Heart left ventricle (tissue), 16 donors: ENCODE measurements at regions of chr10 and their contacts with region 1.

Region 1: GRCh38 chr10:3785257-3785850 is 345 bp upstream of the KLF6 start:
- DNase-seq: peak; percentile 99 to 100 (median 99)
- ATAC-seq: peak; percentile 80 to 91 (median 82)
- H3K4me3 ChIP-seq: peak overlapping the region; percentile 66 to 100 (median 96)
- H3K27ac ChIP-seq: peak overlapping the region; percentile 98 to 100 (median 100)
- H3K4me1 ChIP-seq: peaks cover 0 to 35% (median 20%) of the 10 kb centered on the region in 12 donors
- H3K27me3 ChIP-seq: no peaks in the 10 kb centered on the region
- CTCF ChIP-seq: peak in 1 of 12 donors; percentile 21
- POLR2A ChIP-seq: peak; percentile 99 to 100

Region 2: GRCh38 chr10:3197348-3198003 is 587.9 kb before region 1 on chr10:
- intact Hi-C with region 1: loop called in 1 of 10 experiments (anchors 5 kb)
- DNase-seq: peak; percentile 78 to 90 (median 83)
- ATAC-seq: peak; percentile 76 to 96 (median 92)
- H3K4me3 ChIP-seq: peak overlapping the region in 9 of 12 donors; percentile 18 to 43 (median 32)
- H3K27ac ChIP-seq: peak overlapping the region in 4 of 12 donors; percentile 26 to 61 (median 28)
- H3K4me1 ChIP-seq: peaks cover 0 to 23% (median 11%) of the 10 kb centered on the region in 12 donors
- H3K27me3 ChIP-seq: no peaks in the 10 kb centered on the region
- CTCF ChIP-seq: peak; percentile 81 to 96 (median 93)
- POLR2A ChIP-seq: no peak

Region 3: GRCh38 chr10:3500408-3500856 is 284.9 kb before region 1 on chr10:
- intact Hi-C with region 1: loop called in 1 of 10 experiments (anchors 5 kb)
- DNase-seq: peak; percentile 68 to 91 (median 71)
- ATAC-seq: peak; percentile 92 to 96 (median 94)
- H3K4me3 ChIP-seq: no peak overlapping the region
- H3K27ac ChIP-seq: peak overlapping the region in 10 of 12 donors; percentile 3 to 75 (median 46)
- H3K4me1 ChIP-seq: peaks cover 0 to 24% (median 5%) of the 10 kb centered on the region in 12 donors
- H3K27me3 ChIP-seq: no peaks in the 10 kb centered on the region
- CTCF ChIP-seq: no peak
- POLR2A ChIP-seq: no peak

Region 4: DNA sequence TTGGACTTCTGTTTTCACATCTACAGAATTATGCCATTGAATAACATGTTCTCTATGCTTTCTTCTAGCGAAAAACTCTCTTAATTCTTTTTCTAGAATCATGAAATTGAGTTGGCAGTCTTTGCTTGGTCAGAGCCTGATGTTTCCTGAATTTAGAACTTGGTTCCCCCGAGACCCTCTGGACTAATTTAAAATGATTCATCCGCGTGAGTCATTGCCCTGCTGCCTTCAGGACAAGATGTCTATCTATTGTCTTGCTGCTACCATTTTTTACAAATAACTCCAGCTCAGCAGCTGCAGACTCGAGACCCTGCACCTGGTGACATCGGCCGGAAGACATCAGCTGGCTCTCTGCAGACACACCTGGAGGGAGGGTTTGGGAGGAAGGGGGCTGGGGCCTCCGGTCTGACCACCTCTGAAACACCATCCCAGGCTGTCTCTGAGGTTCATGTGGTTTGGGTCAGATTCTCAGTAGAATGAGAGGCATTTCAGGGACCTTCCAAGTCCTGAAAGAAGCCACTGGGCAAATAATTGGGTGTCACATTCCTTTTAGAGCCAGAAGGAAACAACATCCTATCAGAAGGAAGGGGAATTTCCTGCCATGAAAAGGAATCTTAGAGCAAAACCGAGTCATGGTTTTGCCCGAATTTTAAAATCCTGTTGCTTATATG is 20.6 kb after region 1 on chr10:
- intact Hi-C with region 1: loop called in 5 of 10 experiments (anchors 1 to 2 kb)
- DNase-seq: peak in 4 of 5 donors; percentile 53 to 76 (median 59)
- ATAC-seq: peak in 3 of 4 donors; percentile 8 to 47 (median 43)
- H3K4me3 ChIP-seq: peak overlapping the region in 6 of 12 donors; percentile 4 to 31 (median 9)
- H3K27ac ChIP-seq: peak overlapping the region; percentile 66 to 96 (median 84)
- H3K4me1 ChIP-seq: peaks cover 0 to 94% (median 76%) of the 10 kb centered on the region in 12 donors
- H3K27me3 ChIP-seq: no peaks in the 10 kb centered on the region
- CTCF ChIP-seq: no peak
- POLR2A ChIP-seq: no peak

Region 5: DNA sequence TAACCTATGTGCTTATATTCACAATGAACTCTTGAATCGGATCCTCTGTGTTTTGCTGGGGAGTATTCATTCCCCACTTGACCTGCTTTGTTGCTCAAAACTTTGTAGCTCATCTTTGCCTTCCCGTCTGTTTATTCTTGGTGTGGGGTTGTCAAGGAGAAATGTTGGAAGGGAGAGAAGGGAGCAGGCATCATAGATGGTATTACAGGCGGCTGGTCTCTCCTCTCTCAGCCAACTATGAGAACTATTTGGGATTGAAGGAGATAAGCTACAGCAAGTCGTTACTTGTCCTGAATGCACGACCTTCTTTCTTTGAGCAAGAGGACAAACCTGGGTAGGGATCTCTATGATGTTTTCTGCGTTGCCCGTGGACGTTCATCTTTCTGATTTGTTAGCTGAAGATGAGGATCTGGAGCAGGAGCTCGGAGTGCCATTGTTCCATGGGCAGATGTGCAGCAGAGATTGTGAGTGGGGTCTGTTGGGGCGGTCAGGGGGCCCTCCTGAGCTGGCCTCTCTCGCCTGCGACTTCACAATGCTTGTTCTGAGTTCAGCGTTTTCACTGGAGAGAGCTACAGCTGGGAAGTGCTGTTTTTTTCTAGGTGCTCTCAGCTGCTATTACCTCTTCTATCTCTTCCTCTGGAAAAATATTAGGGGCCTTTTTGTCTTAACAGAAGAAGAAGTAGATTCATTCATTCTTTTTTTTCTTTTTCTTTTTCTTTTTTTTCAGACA is 126.5 kb after region 1 on chr10:
- intact Hi-C with region 1: loop called in 6 of 10 experiments (anchors 2 to 10 kb)
- DNase-seq: no peak
- ATAC-seq: peak; percentile 87 to 90 (median 89)
- H3K4me3 ChIP-seq: peak overlapping the region in 11 of 12 donors; percentile 6 to 56 (median 48)
- H3K27ac ChIP-seq: peak overlapping the region; percentile 53 to 91 (median 82)
- H3K4me1 ChIP-seq: peaks cover 0 to 36% (median 0%) of the 10 kb centered on the region in 12 donors
- H3K27me3 ChIP-seq: no peaks in the 10 kb centered on the region
- CTCF ChIP-seq: no peak
- POLR2A ChIP-seq: peak in 1 of 2 donors; percentile 30

Region 6: GRCh38 chr10:4372601-4373000 is 587.2 kb after region 1 on chr10:
- intact Hi-C with region 1: loop called in 1 of 10 experiments (anchors 10 kb)
- DNase-seq: peak in 2 of 5 donors; percentile 19 to 35
- ATAC-seq: peak; percentile 84 to 98 (median 91)
- H3K4me3 ChIP-seq: no peak overlapping the region
- H3K27ac ChIP-seq: peak overlapping the region in 10 of 12 donors; percentile 32 to 71 (median 59)
- H3K4me1 ChIP-seq: peaks cover 0 to 20% (median 7%) of the 10 kb centered on the region in 12 donors
- H3K27me3 ChIP-seq: no peaks in the 10 kb centered on the region
- CTCF ChIP-seq: no peak
- POLR2A ChIP-seq: no peak

Region 7: GRCh38 chr10:4767033-4767814 is 981.9 kb after region 1 on chr10:
- intact Hi-C with region 1: loop called in 9 of 10 experiments (anchors 2 to 10 kb)
- DNase-seq: peak in 2 of 5 donors; percentile 19 to 28
- ATAC-seq: peak in 3 of 4 donors; percentile 44 to 66 (median 57)
- H3K4me3 ChIP-seq: no peak overlapping the region
- H3K27ac ChIP-seq: peak overlapping the region in 10 of 12 donors; percentile 1 to 53 (median 36)
- H3K4me1 ChIP-seq: peaks cover 0 to 52% (median 33%) of the 10 kb centered on the region in 12 donors
- H3K27me3 ChIP-seq: no peaks in the 10 kb centered on the region
- CTCF ChIP-seq: peak; percentile 58 to 90 (median 81)
- POLR2A ChIP-seq: no peak